Panc1 (cell line): ENCODE measurements at regions of chr12 and their contacts with region 1.

Region 1: GRCh38 chr12:55738123-55739024 is 4.5 kb upstream of the GDF11 start:
- DNase-seq: peak; percentile 91
- ATAC-seq: peak; percentile 74
- H3K4me3 ChIP-seq: peak overlapping the region; percentile 44 to 73
- H3K27ac ChIP-seq: peak overlapping the region; percentile 30; the same call in 1 of the 2 replicates
- H3K4me1 ChIP-seq: peaks cover 12% of the 10 kb centered on the region
- H3K27me3 ChIP-seq: no peaks in the 10 kb centered on the region
- CTCF ChIP-seq: peak; percentile 83

Region 2: DNA sequence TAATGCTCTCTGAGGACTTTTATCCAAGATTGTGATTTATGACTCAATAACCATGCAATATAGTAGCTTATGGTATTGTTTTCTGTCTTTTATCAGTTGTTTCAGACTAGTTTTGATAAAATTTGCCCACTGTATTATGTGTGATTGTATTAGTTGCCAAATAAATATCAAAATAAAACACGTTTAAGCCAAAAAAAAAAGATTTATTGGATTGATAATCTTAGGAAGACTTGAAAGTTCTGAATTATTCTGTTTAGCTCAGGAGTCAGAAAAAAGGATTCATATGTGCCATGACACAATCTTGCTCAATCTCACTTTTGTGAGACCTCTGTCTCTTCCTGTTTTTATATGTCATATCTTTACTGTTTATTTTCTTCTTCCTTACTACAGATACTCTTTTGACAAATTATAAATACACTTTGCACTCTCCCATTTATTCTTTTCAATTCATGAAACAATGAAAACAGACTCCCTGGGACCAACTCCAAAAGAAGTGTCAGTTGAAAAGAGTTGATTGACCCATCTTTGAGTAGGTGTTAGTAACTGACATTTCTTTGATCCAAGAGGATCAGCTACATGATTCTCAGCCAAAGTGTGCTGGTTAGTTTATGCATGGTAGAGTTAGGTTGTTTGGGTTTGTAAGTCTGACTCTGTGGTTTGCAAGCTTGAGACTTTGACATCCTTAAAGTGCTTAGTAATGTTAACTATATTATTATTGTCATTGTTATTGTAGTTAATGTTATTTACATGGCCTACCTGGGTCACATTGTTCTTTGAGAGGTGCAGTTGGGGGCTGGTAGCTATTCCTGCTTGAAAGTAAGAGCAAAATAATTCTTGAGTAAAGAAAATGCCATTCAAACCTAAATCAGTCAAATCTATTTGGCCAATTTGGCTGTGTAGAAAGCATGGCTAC is 309.8 kb before region 1 on chr12:
- CTCF ChIA-PET with region 1: no interaction called
- POLR2A ChIA-PET with region 1: no interaction called
- in situ Hi-C with region 1: no loop called
- intact Hi-C with region 1: no loop called
- DNase-seq: no peak
- ATAC-seq: no peak
- H3K4me3 ChIP-seq: no peak overlapping the region
- H3K27ac ChIP-seq: no peak overlapping the region
- H3K4me1 ChIP-seq: no peaks in the 10 kb centered on the region
- H3K27me3 ChIP-seq: no peaks in the 10 kb centered on the region
- CTCF ChIP-seq: no peak

Region 3: DNA sequence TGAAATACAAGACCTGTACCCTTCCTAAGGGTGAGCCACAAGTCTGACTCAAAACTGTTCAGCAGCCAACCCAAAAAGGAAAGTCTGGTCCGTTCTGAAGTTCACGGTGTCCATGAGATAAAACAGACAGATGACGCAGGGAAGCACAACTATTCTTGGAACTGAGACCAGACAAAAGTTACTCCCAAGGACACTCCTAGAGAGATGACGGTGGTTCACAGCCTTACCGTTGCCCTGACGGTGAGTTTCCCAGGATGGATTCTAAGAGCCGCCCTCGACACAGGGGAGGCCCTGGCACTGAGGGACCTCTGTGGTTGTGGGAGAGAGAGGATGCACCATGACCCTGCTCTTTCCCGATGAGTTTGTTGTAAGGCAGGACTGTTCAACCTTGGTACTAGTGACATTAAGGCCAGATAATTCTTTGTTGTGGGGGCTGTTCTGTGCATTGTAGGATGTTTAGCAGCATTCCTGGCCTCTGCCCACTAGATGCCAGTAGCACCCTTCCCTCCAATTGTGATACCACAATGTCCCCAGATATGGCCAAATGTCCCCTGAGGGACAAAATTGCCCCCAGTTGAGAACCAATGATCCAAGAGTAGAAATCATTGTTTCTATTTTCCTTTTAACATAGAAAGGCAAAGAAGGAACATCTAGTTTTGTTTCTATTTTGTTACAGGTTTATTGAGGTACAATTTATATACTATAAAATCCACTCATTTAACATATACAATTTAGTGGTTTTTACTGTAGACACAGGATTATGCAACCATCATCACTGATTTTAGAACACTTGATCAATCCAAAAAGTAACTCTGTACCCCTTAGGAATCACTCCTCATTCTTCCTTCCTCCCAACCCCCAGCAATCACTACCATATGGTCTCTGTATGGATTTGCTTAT is 78.6 kb before region 1 on chr12:
- CTCF ChIA-PET with region 1: no interaction called
- POLR2A ChIA-PET with region 1: no interaction called
- in situ Hi-C with region 1: no loop called
- intact Hi-C with region 1: loop called (anchors 1 kb)
- DNase-seq: no peak
- ATAC-seq: peak; percentile 79; the same call in 1 of the 2 replicates
- H3K4me3 ChIP-seq: no peak overlapping the region
- H3K27ac ChIP-seq: no peak overlapping the region
- H3K4me1 ChIP-seq: no peaks in the 10 kb centered on the region
- H3K27me3 ChIP-seq: peaks cover 4% of the 10 kb centered on the region; the same call in 1 of the 2 replicates
- CTCF ChIP-seq: peak; percentile 80

Region 4: DNA sequence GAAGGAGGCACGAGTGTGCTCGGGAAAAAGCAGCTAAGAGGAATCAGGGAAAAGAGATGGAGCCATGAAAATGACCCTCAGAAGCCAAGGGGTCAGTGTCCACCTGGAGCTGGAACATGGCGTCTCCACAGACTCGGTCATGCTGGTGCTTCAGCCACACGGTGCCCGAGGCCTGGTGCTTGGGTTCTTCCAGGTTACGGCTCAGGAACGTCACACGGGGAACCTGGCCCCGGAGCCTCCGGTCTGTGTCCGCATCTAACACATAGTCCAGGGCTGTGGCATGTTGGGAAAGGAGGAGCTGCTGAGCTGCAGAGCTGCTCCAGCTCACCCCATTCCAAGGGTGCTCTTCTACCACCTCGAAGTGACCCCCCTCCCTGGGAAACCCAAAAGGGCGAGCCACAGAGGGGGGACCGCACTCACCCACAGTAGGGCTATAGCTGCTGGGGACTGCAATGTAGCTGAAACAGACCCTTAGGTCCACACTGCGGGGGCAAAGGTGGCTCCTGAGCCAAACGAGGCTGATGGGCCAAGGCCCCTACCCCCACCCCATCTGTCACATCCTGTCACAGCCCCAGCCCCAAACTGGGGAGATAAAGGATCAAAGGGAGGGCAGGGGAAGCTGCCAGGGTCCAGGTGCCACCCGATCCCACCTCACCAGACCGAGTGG is 41.4 kb before region 1 on chr12:
- CTCF ChIA-PET with region 1: no interaction called
- POLR2A ChIA-PET with region 1: no interaction called
- in situ Hi-C with region 1: no loop called
- intact Hi-C with region 1: no loop called
- DNase-seq: no peak
- ATAC-seq: no peak
- H3K4me3 ChIP-seq: no peak overlapping the region
- H3K27ac ChIP-seq: no peak overlapping the region
- H3K4me1 ChIP-seq: no peaks in the 10 kb centered on the region
- H3K27me3 ChIP-seq: no peaks in the 10 kb centered on the region
- CTCF ChIP-seq: no peak

Region 5: DNA sequence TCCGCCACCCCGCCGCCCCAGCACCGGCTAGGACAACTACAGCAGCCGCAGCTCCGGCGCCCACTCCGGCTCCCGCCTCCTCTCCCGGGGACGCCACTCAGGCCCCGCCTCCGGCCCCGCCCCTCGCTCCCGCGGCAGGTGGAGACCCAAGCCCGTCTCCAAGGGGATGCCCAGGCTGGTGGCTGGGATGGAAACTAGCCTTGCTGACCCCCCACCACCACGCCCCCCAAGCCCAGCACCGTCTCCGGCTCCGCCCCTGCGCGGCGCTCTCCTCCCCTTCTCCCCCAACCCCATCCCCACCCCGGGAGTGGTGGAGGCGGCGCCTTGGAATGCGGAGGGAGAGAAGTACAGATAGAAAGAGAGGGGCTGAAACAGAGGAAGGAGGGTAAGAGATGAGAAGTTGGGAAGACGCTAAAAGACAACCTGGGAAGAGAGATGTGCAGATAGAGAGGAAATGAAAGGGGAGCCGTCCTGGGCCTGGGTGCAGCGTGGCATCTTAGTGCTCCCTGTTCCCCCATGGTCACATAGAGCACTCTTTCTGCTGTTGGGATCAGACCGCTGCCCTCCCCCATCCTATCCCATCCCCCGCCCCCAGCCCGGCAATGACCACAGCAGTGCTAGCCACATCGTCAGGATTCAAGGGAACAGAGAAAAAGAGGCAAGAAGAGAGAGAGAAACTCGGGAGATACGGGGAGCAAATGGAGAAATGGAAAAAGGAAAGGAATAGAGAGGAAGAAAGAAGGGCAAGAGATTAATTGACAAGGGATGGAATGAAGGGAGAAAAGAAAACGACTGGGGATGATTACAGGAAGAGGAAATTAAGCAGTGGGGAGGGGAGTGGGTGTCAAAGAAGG is 30.3 kb before region 1 on chr12 and contains the start of gene ITGA7:
- CTCF ChIA-PET with region 1: no interaction called
- POLR2A ChIA-PET with region 1: no interaction called
- in situ Hi-C with region 1: no loop called
- intact Hi-C with region 1: no loop called
- DNase-seq: no peak
- ATAC-seq: peak; percentile 77
- H3K4me3 ChIP-seq: peak within 1 kb of the TSS; percentile 29 to 34
- H3K27ac ChIP-seq: no peak within 1 kb of the TSS
- H3K4me1 ChIP-seq: no peaks in the 10 kb centered on the region; the same call in 1 of the 2 replicates
- H3K27me3 ChIP-seq: peaks cover 13% of the 10 kb centered on the region
- CTCF ChIP-seq: no peak
- total RNA-seq, gene ITGA7: 2.5 TPM

Region 6: DNA sequence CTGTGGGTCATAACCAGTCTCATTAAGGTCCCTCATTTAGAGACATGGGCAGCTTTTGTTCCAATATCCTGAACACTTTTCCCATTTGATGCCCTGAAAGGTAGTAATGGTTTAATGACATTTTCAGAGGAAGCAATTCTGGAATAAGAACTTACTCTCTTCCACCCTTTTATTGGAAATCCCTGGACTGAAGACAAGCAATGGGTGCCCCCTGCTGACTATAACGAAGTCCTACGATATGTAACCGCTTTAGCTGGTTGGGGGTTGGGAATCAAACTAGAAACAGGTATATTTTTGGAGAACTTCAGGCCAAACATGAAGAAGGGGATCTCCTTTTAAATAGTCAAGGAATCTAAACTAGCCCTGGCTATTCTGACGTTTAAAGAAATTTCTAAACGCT is 58.7 kb after region 1 on chr12:
- CTCF ChIA-PET with region 1: interaction called, 7 read pairs
- POLR2A ChIA-PET with region 1: no interaction called
- in situ Hi-C with region 1: no loop called
- intact Hi-C with region 1: loop called (anchors 2 kb)
- DNase-seq: no peak
- ATAC-seq: no peak; the same call in 1 of the 2 replicates
- H3K4me3 ChIP-seq: no peak overlapping the region
- H3K27ac ChIP-seq: no peak overlapping the region
- H3K4me1 ChIP-seq: 0 out of 2 replicates have a peak, but pooled peaks cover 3% of the 10 kb centered on the region
- H3K27me3 ChIP-seq: no peaks in the 10 kb centered on the region
- CTCF ChIP-seq: peak; percentile 68

Region 7: DNA sequence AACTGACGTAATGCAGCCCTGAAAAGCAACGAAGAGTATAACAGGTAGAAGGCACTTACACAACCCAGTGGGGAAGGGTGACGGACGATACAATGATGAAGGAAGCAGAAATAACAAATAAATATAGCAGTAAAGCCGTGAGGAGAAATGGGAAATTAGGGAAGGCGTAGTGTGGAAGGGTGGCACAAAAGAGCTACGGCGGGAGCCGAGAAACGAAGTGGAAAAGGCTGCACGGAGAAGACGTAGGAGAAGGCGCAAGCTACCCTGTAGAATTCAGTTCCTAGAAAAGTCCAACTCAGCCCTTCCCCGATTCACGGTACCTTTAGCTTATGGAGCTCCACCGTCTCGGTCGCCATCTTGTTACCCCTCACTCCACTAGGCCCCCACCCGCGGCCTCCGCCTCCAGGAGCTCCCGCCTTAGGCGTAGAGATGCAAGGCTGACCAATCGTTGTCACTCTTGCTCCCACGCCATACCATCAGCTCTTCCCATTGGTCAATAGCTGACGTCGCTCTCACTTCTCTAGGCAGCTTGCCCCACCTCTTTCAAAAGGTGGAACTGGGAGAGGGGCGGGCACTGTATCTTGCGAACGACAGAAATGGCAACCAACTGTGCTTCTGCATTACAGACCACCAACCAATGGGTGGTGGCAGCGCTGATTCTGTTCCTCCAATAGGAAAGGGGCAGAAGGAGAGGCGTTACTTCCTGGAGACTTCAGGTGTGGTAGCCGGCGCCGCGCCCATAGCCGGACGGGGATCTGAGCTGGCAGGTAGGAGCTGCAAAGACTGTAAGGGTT is 79.2 kb after region 1 on chr12 and contains the starts of genes ORMDL2 and SARNP:
- CTCF ChIA-PET with region 1: interaction called, 11 read pairs
- POLR2A ChIA-PET with region 1: interaction called, 4 read pairs
- in situ Hi-C with region 1: no loop called
- intact Hi-C with region 1: loop called (anchors 5 kb)
- DNase-seq: peak; percentile 100
- ATAC-seq: peak; percentile 97
- H3K4me3 ChIP-seq: peak within 1 kb of the TSS; percentile 89 to 100
- H3K27ac ChIP-seq: peak within 1 kb of the TSS; percentile 100
- H3K4me1 ChIP-seq: peaks cover 16% of the 10 kb centered on the region
- H3K27me3 ChIP-seq: no peaks in the 10 kb centered on the region
- CTCF ChIP-seq: no peak
- total RNA-seq, gene ORMDL2: 59.6 TPM
- total RNA-seq, gene SARNP: 69.3 TPM

Region 8: GRCh38 chr12:55940065-55940732 is 201.8 kb after region 1 on chr12:
- CTCF ChIA-PET with region 1: interaction called, 11 read pairs
- POLR2A ChIA-PET with region 1: no interaction called
- in situ Hi-C with region 1: no loop called
- intact Hi-C with region 1: loop called (anchors 10 kb)
- DNase-seq: peak; percentile 81
- ATAC-seq: peak; percentile 99
- H3K4me3 ChIP-seq: peak overlapping the region; percentile 19 to 48
- H3K27ac ChIP-seq: 0 out of 2 replicates have a peak overlapping the region, but pooled peaks have one; percentile 31
- H3K4me1 ChIP-seq: peaks cover 4% of the 10 kb centered on the region; the same call in 1 of the 2 replicates
- H3K27me3 ChIP-seq: no peaks in the 10 kb centered on the region
- CTCF ChIP-seq: peak; percentile 96

Region 9: GRCh38 chr12:55996715-55997534 is 258.6 kb after region 1 on chr12 and contains the start of gene SUOX:
- CTCF ChIA-PET with region 1: interaction called, 12 read pairs
- POLR2A ChIA-PET with region 1: no interaction called
- in situ Hi-C with region 1: no loop called
- intact Hi-C with region 1: no loop called
- DNase-seq: peak; percentile 87
- ATAC-seq: peak; percentile 100
- H3K4me3 ChIP-seq: peak within 1 kb of the TSS; percentile 88 to 98
- H3K27ac ChIP-seq: peak within 1 kb of the TSS; percentile 90
- H3K4me1 ChIP-seq: no peaks in the 10 kb centered on the region
- H3K27me3 ChIP-seq: no peaks in the 10 kb centered on the region
- CTCF ChIP-seq: no peak
- total RNA-seq, gene SUOX: 20.7 TPM